Naive thymus-derived CD4-positive, alpha-beta T cell (primary cell): ENCODE measurements at regions of chr22 and their contacts with region 1.

Region 1: DNA sequence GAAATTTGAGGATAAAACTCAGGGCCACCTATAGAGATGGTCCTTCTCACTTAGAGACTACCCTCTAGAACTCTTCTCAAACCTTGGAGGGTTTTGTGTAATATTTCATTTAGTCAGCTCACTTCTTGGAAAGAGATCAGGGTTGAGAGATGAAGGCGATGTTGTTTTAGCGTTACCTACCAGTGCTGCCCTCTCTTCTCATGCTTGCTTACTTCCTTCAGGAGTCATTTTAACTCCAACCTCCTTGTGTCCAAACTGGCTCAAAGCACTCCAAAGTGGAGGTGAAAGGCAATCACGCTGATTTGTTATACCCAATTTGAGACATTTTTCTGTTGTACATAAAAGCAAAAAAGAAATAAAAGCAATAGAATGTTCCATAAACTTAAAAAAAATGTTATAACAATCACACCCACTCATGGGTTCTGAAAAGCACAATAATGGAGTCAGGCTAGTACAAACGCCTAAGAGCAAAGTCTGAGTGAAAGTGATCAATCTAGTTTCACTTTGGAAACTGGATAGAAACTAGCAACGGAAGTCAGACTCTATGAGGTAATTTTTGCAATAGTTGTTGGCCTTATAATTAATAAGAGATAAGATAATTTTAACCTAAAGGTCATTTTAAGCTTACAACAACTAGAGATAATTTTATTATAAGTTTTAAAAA is 117.1 kb downstream of the MRTFA start:
- DNase-seq: peak in 7 of 9 donors; percentile 36 to 58 (median 46)
- ATAC-seq: peak; percentile 88
- H3K4me3 ChIP-seq: peak overlapping the region; percentile 49
- H3K4me3 Mint-ChIP-seq: peak overlapping the region; percentile 67 to 88 (median 80)
- H3K27ac ChIP-seq: peak overlapping the region; percentile 61
- H3K27ac Mint-ChIP-seq: peak overlapping the region; percentile 84 to 98 (median 95)
- H3K4me1 ChIP-seq: peaks cover 10 to 15% of the 10 kb centered on the region in 2 donors
- H3K4me1 Mint-ChIP-seq: peaks cover 25 to 56% (median 42%) of the 10 kb centered on the region in 7 donors
- H3K27me3 ChIP-seq: no peaks in the 10 kb centered on the region
- H3K27me3 Mint-ChIP-seq: no peaks in the 10 kb centered on the region

Region 2: DNA sequence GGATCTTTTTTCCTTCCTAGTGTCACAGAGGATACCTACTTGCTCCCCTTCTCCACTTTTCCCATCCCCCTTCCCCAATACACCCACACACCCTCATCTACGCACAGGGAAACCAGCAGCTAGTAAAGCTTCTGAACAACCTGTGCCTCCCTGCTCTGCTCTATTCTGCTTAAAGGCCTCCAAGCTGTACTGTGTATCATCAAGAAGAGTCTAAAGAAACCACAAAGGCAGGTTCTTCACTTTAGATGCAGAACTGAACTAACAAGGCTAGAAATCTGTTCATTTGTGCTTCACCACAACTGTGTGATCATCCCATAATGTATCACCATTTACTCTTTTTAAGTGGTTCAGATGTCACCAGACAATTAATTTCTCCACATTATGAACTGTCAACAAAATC is 16.5 kb before region 1 on chr22:
- CTCF ChIA-PET with region 1: interaction called, 4 read pairs
- POLR2A ChIA-PET with region 1: interaction called, 4 read pairs
- intact Hi-C with region 1: loop called in 1 of 2 experiments (anchors 2 kb)
- DNase-seq: peak in 5 of 9 donors; percentile 14 to 33 (median 22)
- ATAC-seq: peak; percentile 64
- H3K4me3 ChIP-seq: no peak overlapping the region
- H3K4me3 Mint-ChIP-seq: peak overlapping the region in 7 of 10 donors; percentile 2 to 65 (median 32)
- H3K27ac ChIP-seq: peak overlapping the region; percentile 46
- H3K27ac Mint-ChIP-seq: peak overlapping the region; percentile 5 to 93 (median 69)
- H3K4me1 ChIP-seq: no peaks in the 10 kb centered on the region
- H3K4me1 Mint-ChIP-seq: peaks cover 13 to 52% (median 39%) of the 10 kb centered on the region in 7 donors
- H3K27me3 ChIP-seq: no peaks in the 10 kb centered on the region
- H3K27me3 Mint-ChIP-seq: no peaks in the 10 kb centered on the region

Region 3: GRCh38 chr22:40533712-40534378 is 14.4 kb after region 1 on chr22:
- CTCF ChIA-PET with region 1: interaction called, 7 read pairs
- POLR2A ChIA-PET with region 1: interaction called, 12 read pairs
- intact Hi-C with region 1: no loop called
- DNase-seq: peak in 7 of 9 donors; percentile 71 to 85 (median 81)
- ATAC-seq: peak; percentile 99
- H3K4me3 ChIP-seq: peak overlapping the region; percentile 53
- H3K4me3 Mint-ChIP-seq: peak overlapping the region; percentile 78 to 96 (median 89)
- H3K27ac ChIP-seq: peak overlapping the region; percentile 64
- H3K27ac Mint-ChIP-seq: peak overlapping the region; percentile 84 to 96 (median 88)
- H3K4me1 ChIP-seq: peaks cover 28 to 36% of the 10 kb centered on the region in 2 donors
- H3K4me1 Mint-ChIP-seq: peaks cover 49 to 71% (median 64%) of the 10 kb centered on the region in 7 donors
- H3K27me3 ChIP-seq: no peaks in the 10 kb centered on the region
- H3K27me3 Mint-ChIP-seq: no peaks in the 10 kb centered on the region

Region 4: DNA sequence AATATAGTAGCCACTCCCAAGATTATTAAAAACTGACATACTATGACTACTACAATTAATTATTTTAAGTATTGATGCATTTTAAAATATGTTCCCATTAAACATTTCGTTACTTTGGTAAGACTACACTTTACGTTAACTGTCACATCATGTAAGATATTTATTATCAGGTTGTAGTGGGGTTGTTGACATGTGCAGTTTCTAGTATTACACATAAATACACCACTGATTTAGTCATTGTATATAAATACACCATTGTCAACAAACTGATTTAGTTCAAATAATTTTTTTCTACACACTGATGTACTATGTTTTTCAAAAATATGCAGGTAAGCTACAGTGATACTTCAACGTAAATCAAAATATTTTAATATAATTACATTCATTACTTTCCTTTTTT is 325.5 kb after region 1 on chr22:
- CTCF ChIA-PET with region 1: no interaction called
- POLR2A ChIA-PET with region 1: no interaction called
- intact Hi-C with region 1: no loop called
- DNase-seq: no peak
- ATAC-seq: no peak
- H3K4me3 ChIP-seq: no peak overlapping the region
- H3K4me3 Mint-ChIP-seq: no peak overlapping the region
- H3K27ac ChIP-seq: no peak overlapping the region
- H3K27ac Mint-ChIP-seq: peak overlapping the region in 2 of 9 donors; percentile 28 to 39
- H3K4me1 ChIP-seq: no peaks in the 10 kb centered on the region
- H3K4me1 Mint-ChIP-seq: peaks cover 0 to 30% (median 21%) of the 10 kb centered on the region in 7 donors
- H3K27me3 ChIP-seq: no peaks in the 10 kb centered on the region
- H3K27me3 Mint-ChIP-seq: no peaks in the 10 kb centered on the region